ENCODE measurements at regions of chr11 and their contacts with region 1.

Region 1: GRCh38 chr11:12680246-12680939 is 6.2 kb downstream of the TEAD1 start:
- DNase-seq: peak; percentile 90 to 92 (median 92)
- ATAC-seq: peak; percentile 81
- H3K4me3 ChIP-seq: no peak overlapping the region
- H3K4me1 ChIP-seq: peaks cover 40% of the 10 kb centered on the region
- CTCF ChIP-seq: no peak

Region 2: GRCh38 chr11:12235947-12236743 is 444.2 kb before region 1 on chr11:
- intact Hi-C with region 1: no loop called
- DNase-seq: peak in 1 of 3 donors; percentile 37
- ATAC-seq: peak; percentile 75
- H3K4me3 ChIP-seq: no peak overlapping the region
- H3K4me1 ChIP-seq: peaks cover 17% of the 10 kb centered on the region
- CTCF ChIP-seq: peak; percentile 41

Region 3: GRCh38 chr11:12291766-12292165 is 388.6 kb before region 1 on chr11:
- intact Hi-C with region 1: no loop called
- DNase-seq: no peak
- ATAC-seq: no peak
- H3K4me3 ChIP-seq: no peak overlapping the region
- H3K4me1 ChIP-seq: no peaks in the 10 kb centered on the region
- CTCF ChIP-seq: no peak

Region 4: GRCh38 chr11:12888525-12889158 is 208.2 kb after region 1 on chr11:
- intact Hi-C with region 1: loop called in 1 of 2 experiments (anchors 10 kb)
- DNase-seq: peak; percentile 64 to 98 (median 83)
- ATAC-seq: peak; percentile 89
- H3K4me3 ChIP-seq: no peak overlapping the region
- H3K4me1 ChIP-seq: no peaks in the 10 kb centered on the region
- CTCF ChIP-seq: peak; percentile 43